ENCODE measurements at regions of chr17 and their contacts with region 1.

Region 1: DNA sequence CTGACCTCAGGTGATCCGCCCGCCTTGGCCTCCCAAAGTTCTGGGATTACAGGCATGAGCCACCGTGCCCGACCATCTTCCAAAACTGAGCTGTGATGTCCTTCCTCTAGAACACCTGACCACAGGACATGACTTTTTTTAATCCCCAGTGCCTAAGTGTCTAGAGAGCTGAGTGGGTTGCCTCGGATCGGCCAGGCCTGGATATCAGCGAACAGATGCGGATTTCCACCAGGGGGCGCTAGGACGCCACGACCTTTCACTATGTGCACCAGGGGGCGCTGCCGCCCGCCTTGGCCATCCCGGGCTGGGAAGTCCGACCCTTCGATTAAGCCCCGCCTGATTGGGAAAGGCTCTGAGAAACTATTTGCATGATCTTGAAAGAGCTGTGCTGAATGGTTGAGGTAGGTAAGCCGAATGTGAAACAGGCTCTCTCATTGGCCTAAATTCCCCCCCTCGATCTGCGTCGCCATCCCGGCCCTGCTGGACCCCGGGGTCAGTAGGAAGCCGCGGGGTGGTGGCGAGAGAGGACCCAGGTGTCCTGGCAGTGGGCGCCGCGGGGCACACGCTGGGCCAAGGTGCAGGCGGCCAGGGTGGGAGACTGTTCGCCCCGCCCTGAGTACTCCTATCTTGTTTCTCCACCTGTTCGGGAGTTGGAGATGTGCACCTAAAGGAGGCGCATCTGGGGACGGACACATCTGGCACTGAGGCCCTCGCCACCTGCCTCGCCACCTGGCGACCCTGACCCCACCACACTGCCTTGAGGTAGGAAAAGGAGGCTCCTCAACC is at the start of gene ACBD4:
- DNase-seq: peak; percentile 97
- total RNA-seq, gene ACBD4: 6.4 TPM

Region 2: GRCh38 chr17:44947461-44948314 is 187.7 kb before region 1 on chr17 and contains the start of gene KIF18B:
- intact Hi-C with region 1: no loop called
- DNase-seq: peak; percentile 95
- total RNA-seq, gene KIF18B: 0.13 TPM

Region 3: GRCh38 chr17:45098869-45099616 is 36.3 kb before region 1 on chr17:
- intact Hi-C with region 1: loop called (anchors 5 kb)
- DNase-seq: peak; percentile 94

Region 4: GRCh38 chr17:45197555-45198334 is 62.4 kb after region 1 on chr17:
- intact Hi-C with region 1: loop called (anchors 1 kb)
- DNase-seq: peak; percentile 95

Measured in cardiac septum (tissue), 1 donor.